Spleen (tissue), 13 donors: ENCODE measurements at regions of chr14 and their contacts with region 1.

Region 1: DNA sequence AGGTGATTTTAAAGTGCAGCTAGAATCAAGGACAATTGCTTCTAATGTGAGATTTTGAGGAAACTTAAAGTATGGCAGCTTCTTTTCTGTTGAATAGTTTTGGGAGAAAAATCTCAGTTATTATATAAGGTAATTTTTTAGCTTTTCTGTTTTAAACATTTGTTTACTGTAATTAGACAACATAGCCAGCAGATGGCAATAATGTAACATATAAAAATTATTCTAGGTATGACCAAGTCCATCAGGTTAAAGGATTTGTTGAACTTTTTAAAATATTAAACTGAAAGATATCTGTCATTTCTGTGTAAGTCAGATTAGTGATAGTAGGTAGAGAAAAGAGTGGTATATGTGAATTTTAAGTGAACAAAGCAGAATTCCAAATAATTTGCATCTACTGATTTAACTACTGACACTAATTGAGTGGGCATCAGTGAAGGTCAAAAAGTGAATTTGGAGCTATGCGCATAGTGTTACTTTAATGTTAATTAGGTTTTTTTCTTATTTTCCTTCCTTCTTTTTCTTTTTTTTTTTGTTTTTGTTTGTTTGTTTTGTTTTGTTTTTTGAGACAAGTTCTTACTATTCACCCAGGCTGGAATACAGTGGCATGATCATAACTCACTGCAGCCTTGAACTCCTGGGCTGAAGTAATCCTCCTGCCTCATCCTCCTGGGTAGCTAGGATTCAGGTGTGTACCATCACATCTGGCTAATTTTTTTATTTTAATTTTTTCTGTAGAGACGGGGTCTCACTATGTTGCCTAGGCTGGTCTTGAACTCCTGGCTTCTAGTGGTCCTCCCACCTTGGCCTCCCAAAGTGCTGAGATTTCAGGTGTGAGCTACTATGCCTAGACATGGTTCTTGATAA is 18.6 kb downstream of the PRORP start:
- DNase-seq: no peak
- H3K4me3 ChIP-seq: no peak overlapping the region
- H3K27ac ChIP-seq: no peak overlapping the region
- H3K4me1 ChIP-seq: peaks cover 0 to 16% (median 0%) of the 10 kb centered on the region in 6 donors
- H3K27me3 ChIP-seq: no peaks in the 10 kb centered on the region
- CTCF ChIP-seq: peak in 8 of 11 experiments; percentile 50 to 79 (median 60)
- POLR2A ChIP-seq: no peak

Region 2: DNA sequence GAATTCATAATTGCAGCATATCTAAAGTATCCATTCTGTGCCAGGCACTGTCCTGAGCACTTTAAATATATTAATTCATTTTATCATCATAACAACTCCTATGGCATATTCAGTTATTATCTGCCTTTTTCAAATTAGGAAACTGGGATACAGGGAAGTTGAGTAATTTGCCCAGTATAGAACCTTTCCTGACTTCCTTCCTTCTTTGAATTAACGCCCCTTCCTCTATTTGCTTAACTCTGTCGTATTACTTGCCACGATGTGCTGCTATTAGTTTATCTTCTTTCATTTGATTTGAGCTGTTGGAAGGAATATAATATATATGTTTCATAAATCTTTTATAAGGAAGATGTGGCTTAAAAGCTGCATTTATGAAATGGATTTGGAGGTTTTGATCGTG is 120.2 kb before region 1 on chr14:
- intact Hi-C with region 1: no loop called
- DNase-seq: no peak
- H3K4me3 ChIP-seq: no peak overlapping the region
- H3K27ac ChIP-seq: peak overlapping the region in 1 of 8 donors; percentile 26
- H3K4me1 ChIP-seq: peaks cover 0 to 8% (median 0%) of the 10 kb centered on the region in 6 donors
- H3K27me3 ChIP-seq: no peaks in the 10 kb centered on the region
- CTCF ChIP-seq: no peak
- POLR2A ChIP-seq: no peak

Region 3: DNA sequence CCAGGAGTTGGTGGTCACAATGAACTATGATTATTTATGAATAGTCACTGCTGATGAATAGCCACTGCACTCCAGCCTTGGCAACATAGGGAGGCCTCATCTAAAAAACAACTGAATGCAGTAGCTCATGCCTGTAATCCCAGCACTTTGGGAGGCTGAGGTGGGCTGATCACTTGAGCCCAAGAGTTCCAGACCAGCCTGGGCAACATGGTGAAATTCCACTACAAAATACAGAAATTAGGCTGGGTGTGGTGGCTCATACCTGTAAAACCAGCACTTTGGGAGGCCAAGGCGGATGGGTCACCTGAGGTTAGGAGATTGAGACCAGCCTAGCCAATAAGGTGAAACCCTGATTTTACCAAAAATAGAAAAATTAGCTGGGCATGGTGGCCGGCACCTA is 108.4 kb before region 1 on chr14:
- intact Hi-C with region 1: no loop called
- DNase-seq: peak; percentile 14
- H3K4me3 ChIP-seq: no peak overlapping the region
- H3K27ac ChIP-seq: no peak overlapping the region
- H3K4me1 ChIP-seq: no peaks in the 10 kb centered on the region
- H3K27me3 ChIP-seq: no peaks in the 10 kb centered on the region
- CTCF ChIP-seq: no peak
- POLR2A ChIP-seq: no peak

Region 4: GRCh38 chr14:35412272-35413056 is 271.5 kb after region 1 on chr14:
- intact Hi-C with region 1: loop called (anchors 2 kb)
- DNase-seq: no peak
- H3K4me3 ChIP-seq: no peak overlapping the region
- H3K27ac ChIP-seq: peak overlapping the region in 1 of 8 donors; percentile 69
- H3K4me1 ChIP-seq: peaks cover 5 to 62% (median 42%) of the 10 kb centered on the region in 6 donors
- H3K27me3 ChIP-seq: no peaks in the 10 kb centered on the region
- CTCF ChIP-seq: no peak
- POLR2A ChIP-seq: no peak

Region 5: GRCh38 chr14:35470755-35471154 is 329.8 kb after region 1 on chr14:
- intact Hi-C with region 1: no loop called
- DNase-seq: no peak
- H3K4me3 ChIP-seq: no peak overlapping the region
- H3K27ac ChIP-seq: no peak overlapping the region
- H3K4me1 ChIP-seq: no peaks in the 10 kb centered on the region
- H3K27me3 ChIP-seq: peaks cover 0 to 12% (median 0%) of the 10 kb centered on the region in 7 donors
- CTCF ChIP-seq: no peak
- POLR2A ChIP-seq: no peak